ENCODE measurements at regions of chr1 and their contacts with region 1.

Region 1: DNA sequence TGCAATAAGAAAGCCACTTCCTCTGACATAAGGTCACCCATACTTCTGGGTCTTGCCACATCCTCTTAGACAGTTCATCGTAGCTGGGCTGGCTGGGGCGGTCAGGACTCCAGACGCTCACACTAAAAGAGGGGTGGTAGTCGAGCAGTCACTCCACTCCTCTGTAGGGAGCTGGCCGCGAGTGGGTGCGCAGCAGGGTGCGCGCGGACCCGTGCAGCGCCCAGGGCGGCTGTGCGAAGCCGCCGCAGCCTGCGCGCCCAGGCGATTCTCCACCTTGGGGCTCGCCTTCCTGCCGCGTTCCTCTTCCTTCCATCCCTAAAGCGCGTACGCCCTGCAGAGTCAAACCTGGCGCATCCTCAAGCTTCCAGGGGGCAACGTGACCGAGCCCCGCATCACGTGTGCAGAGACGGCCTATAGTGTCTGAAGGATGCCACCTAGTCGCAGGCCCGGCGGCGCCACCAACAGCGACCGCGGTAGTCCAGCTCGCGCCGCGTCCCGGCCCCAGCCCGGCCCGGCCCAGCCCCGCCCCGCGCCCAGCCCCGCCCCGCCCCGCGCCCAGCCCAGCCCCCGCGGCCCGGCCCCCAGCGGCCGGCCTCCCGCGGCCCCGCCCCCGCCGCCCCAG is 360 bp upstream of the PRDX6 start:
- H3K4me3 ChIP-seq: peak overlapping the region; percentile 87
- H3K27ac ChIP-seq: peak overlapping the region; percentile 76
- H3K4me1 ChIP-seq: peaks cover 6% of the 10 kb centered on the region
- CTCF ChIP-seq: peak; percentile 7; the same call in 1 of the 2 replicates

Region 2: DNA sequence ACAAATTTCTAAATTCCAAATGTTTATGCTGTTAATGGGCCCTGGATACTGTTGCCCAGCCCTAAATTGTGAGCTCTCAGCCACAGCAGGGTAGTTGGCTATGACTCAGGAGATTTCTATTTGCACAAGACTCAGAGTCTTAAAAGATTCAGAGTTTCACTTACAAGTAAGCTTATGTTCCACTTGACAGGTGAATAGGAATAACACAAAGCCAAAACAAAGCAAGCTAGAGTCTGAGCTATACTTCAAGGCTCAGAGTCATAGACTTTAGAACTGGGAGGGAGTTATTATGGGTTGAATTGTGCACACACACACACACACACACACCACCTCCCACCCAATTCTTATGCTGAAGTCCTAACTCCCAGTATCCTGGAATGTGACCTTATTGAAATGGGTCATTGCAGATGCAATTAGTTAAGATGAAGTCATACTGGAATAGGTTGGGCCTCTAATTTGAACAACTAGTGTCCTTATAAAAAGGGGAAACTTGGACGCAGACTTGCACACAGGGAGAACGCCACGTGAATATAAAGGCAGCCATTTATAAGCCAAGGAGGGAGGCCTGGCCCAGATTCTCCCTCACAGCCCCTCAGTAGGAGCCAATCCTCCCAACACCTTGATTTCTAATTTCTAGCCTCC is 30.6 kb after region 1 on chr1:
- CTCF ChIA-PET with region 1: interaction called, 7 read pairs
- POLR2A ChIA-PET with region 1: interaction called, 24 read pairs
- H3K4me3 ChIP-seq: no peak overlapping the region
- H3K27ac ChIP-seq: peak overlapping the region; percentile 69
- H3K4me1 ChIP-seq: peaks cover 8% of the 10 kb centered on the region
- CTCF ChIP-seq: no peak

Region 3: DNA sequence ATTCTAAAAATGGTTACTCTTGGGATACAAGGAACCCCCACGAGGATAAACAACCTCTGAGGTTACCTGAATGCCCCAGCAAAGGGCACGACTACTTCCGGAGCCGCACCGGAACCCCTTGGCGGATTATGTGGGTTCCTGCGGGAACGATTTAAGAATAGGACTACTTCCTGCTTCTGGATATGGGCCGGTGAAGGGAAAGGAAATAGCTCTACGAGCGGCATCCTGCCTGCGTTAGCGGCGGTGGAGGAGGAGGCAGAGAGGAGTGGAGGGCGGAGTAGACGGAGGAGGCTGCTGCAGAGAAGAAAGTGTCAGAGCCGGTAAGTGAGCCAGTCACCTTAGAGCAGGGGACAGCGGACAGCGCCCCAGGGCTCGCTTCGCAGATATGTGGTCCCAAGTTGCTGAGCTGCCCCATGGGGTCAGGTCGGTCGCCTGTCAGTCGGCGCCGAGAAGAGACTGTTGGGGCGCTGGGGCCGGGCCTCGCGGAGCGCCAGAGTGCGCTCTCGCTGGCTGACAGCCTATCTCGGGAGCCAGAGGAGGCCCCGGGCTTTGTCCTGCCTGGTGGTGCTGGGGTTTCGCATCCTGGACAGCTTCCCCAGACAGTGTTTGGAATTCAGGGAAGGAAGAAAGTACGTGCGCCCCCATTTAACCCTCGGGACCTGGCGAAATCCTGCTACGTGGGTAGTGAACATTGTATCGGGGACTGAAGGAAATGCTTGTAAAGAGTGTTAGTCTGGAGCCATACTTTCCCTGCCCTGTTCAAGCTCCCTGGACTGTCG is 238.2 kb after region 1 on chr1 and contains the start of gene KLHL20:
- CTCF ChIA-PET with region 1: no interaction called
- POLR2A ChIA-PET with region 1: interaction called, 10 read pairs
- H3K4me3 ChIP-seq: peak within 1 kb of the TSS; percentile 99
- H3K27ac ChIP-seq: peak within 1 kb of the TSS; percentile 38
- H3K4me1 ChIP-seq: no peaks in the 10 kb centered on the region
- CTCF ChIP-seq: peak; percentile 82

Region 4: GRCh38 chr1:173824331-173825081 is 347.7 kb after region 1 on chr1 and contains the starts of genes CENPL and DARS2:
- CTCF ChIA-PET with region 1: no interaction called
- POLR2A ChIA-PET with region 1: interaction called, 15 read pairs
- H3K4me3 ChIP-seq: peak within 1 kb of the TSS; percentile 91
- H3K27ac ChIP-seq: peak within 1 kb of the TSS; percentile 74
- H3K4me1 ChIP-seq: no peaks in the 10 kb centered on the region; the same call in 1 of the 2 replicates
- CTCF ChIP-seq: peak; percentile 15

Region 5: DNA sequence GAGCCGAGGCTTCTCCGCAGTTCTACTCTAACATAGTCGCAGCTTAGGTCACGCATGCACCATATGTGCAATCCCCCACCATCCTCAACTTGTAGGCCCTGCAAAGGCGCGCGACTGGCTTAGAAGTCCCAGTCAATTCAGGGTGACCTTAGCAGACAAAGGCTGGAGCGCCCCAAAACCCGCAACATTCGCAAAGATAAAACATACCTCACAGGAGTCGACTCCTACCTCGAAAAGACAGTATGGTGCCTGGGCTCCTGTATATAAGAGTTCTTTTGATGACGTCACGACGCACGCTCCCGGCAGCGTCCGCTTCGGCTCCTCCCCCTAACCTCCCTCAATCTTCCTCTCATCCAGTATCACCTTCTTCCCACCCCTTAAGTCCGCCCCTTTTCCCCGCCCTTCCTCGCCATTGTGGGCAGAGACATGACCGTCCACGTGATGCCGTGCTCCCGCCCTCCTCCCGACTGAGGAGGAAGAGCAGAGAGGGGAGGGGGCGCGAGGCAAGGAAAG is 391.0 kb after region 1 on chr1 and contains the start of gene GAS5:
- CTCF ChIA-PET with region 1: interaction called, 3 read pairs
- POLR2A ChIA-PET with region 1: interaction called, 10 read pairs
- H3K4me3 ChIP-seq: peak within 1 kb of the TSS; percentile 90
- H3K27ac ChIP-seq: peak within 1 kb of the TSS; percentile 86
- H3K4me1 ChIP-seq: no peaks in the 10 kb centered on the region; the same call in 1 of the 2 replicates
- CTCF ChIP-seq: no peak

Measured in HEK293 (cell line).